Activated T-helper 1 cell treated with anti-CD3 and anti-CD28 coated beads, Interleukin-12 subunit alpha, Interleukin-12 subunit beta, Interleukin-2, Interleukin-4 antibody, amounts not matched to agents 30 ng/mL and 10 ng/mL and 1 ng/mL, durations not matched to agents 14 hours and 24 hours and 36 hours (primary cell): ENCODE measurements at regions of chr11 and their contacts with region 1.

Region 1: DNA sequence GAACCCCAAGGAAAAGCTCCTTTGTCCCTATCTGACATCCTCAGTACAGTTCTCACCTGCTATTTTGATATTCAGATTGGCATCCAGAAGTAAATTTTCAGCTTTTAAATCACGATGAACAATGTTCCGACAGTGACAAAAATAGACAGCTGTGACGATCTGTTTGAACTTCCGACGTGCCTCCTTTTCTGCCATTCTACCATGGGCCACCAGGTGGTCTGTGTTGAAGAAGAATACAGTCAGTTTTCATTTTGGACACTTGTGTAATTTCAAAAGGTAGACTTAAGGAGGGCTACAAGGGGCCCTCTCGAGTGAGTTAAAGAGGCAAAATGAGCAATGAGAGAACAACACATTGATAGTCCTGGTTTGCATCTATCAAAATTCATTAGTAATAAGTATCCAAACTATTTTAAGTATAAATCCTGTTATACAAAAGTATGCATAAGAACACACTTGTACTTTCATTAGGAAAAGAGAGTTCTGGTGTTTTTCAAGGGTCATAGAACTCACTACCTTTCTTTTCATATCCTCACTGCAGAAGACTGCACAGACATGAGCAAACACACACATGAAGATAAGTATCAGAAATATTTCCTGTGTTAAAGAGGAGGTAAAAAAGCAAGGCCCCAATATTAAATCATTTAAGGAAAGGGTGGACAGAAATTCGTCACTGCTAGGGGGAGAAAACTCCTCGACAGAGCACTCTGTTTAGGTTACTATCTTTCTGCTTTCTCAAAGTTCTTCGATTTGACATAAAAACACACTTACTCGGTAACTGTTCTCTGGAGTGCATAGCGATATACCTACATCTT is 89.9 kb upstream of the APOA1 start:
- DNase-seq: peak; percentile 5
- H3K4me3 Mint-ChIP-seq: peak overlapping the region; percentile 8
- H3K27ac Mint-ChIP-seq: peak overlapping the region; percentile 67
- H3K4me1 Mint-ChIP-seq: peaks cover 74% of the 10 kb centered on the region
- H3K27me3 Mint-ChIP-seq: no peaks in the 10 kb centered on the region

Region 2: GRCh38 chr11:116665523-116665922 is 261.8 kb before region 1 on chr11:
- intact Hi-C with region 1: no loop called
- DNase-seq: no peak
- H3K4me3 Mint-ChIP-seq: no peak overlapping the region
- H3K27ac Mint-ChIP-seq: no peak overlapping the region
- H3K4me1 Mint-ChIP-seq: no peaks in the 10 kb centered on the region
- H3K27me3 Mint-ChIP-seq: peaks cover 3% of the 10 kb centered on the region

Region 3: DNA sequence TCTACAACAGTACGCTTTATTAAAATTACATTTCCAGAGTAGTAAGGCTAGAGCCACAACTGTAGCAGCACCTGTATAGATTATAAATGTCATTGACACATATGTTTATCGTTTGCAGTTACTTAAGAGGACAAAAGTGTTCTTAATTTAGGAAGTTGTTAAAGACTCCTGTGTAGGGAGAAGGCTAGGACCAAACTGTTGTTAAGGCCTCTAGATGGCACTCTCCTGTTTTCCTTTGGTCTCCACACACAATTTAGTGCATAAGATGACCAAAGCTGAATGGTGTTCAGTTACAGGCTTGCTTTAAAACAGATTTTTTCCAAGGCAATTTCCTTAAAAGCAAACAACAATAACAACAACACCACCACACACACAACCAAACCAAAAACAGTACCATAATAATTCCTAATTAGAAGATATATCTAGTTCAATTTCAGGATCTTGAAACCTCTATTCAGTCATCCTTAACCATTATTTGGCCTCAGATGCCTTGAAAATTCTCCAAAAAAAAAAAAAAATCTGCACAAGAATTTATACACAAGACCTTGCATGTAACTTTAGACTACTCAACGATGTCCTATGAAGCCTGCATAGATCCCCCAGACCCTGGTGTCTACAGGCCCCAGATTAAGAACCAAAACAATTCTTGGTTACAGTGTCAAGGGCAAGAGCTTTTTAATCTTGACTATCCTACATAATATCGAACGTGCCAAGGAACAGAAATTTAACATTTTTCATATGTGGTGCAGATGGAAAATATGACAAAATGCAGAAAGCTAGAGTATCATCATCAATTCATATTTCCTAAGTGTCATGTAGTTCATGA is 47.4 kb before region 1 on chr11:
- intact Hi-C with region 1: loop called (anchors 2 kb)
- DNase-seq: no peak
- H3K4me3 Mint-ChIP-seq: no peak overlapping the region
- H3K27ac Mint-ChIP-seq: peak overlapping the region; percentile 66
- H3K4me1 Mint-ChIP-seq: peaks cover 25% of the 10 kb centered on the region
- H3K27me3 Mint-ChIP-seq: no peaks in the 10 kb centered on the region

Region 4: GRCh38 chr11:116986521-116987105 is 59.2 kb after region 1 on chr11:
- intact Hi-C with region 1: loop called (anchors 1 kb)
- DNase-seq: no peak
- H3K4me3 Mint-ChIP-seq: peak overlapping the region; percentile 65
- H3K27ac Mint-ChIP-seq: peak overlapping the region; percentile 73
- H3K4me1 Mint-ChIP-seq: peaks cover 70% of the 10 kb centered on the region
- H3K27me3 Mint-ChIP-seq: no peaks in the 10 kb centered on the region

Region 5: GRCh38 chr11:117020287-117020686 is 92.9 kb after region 1 on chr11:
- intact Hi-C with region 1: loop called (anchors 1 kb)
- DNase-seq: no peak
- H3K4me3 Mint-ChIP-seq: no peak overlapping the region
- H3K27ac Mint-ChIP-seq: peak overlapping the region; percentile 40
- H3K4me1 Mint-ChIP-seq: peaks cover 58% of the 10 kb centered on the region
- H3K27me3 Mint-ChIP-seq: no peaks in the 10 kb centered on the region

Region 6: DNA sequence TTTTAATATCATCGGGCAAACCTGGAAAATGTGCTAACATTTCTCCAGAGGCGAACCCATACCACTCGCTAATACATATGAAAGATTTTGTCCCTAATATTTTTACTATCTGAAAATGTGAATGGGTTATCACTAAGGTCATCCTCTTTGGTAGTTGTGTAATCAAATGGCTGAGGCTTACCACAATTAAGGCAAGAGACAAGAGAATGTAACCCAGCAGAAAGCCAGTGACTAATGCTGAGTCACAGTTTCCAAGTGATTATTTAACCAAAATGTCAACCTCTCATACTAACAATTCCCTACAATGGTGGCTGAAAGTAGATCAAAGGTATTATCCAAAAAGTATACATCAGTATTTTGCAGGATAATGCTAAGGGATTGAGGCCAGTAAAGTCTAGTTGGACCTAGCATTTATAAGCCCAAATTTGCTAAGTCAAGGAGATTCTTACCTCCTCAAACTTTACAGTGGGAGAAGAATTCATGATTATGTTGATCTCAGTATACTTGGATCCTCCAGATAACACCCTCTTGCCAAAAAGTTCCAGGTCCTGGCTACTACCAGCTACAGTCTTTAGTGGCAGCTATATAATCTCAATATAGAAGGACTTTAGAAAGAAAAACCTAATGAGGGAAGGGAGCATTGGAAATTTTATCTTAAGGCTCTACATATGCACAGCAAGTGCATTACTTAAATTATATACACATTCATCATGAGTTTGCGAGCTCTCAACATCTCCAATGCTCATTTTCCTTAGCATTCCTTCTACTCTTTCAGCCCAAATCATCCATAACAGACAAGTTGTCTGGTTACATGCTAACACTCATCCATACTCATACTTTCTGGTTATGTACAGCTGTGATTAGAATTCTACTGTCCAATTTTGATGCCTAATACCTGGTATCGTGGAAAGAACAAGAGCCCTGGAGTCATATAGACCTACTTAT is 145.4 kb after region 1 on chr11:
- intact Hi-C with region 1: loop called (anchors 5 kb)
- DNase-seq: no peak
- H3K4me3 Mint-ChIP-seq: peak overlapping the region; percentile 19
- H3K27ac Mint-ChIP-seq: peak overlapping the region; percentile 53
- H3K4me1 Mint-ChIP-seq: peaks cover 58% of the 10 kb centered on the region
- H3K27me3 Mint-ChIP-seq: no peaks in the 10 kb centered on the region